ENCODE measurements at regions of chr11 and their contacts with region 1.

Region 1: GRCh38 chr11:65539560-65540296 is 14.8 kb downstream of the SCYL1 start:
- DNase-seq: peak in 1 of 2 donors; percentile 42
- H3K4me3 ChIP-seq: peak overlapping the region; percentile 37 to 48
- H3K27ac ChIP-seq: peak overlapping the region; percentile 90 to 93
- H3K4me1 ChIP-seq: peaks cover 10 to 12% of the 10 kb centered on the region in 2 donors
- H3K27me3 ChIP-seq: no peaks in the 10 kb centered on the region
- CTCF ChIP-seq: peak in 3 of 4 experiments; percentile 53 to 80 (median 71)
- POLR2A ChIP-seq: no peak

Region 2: DNA sequence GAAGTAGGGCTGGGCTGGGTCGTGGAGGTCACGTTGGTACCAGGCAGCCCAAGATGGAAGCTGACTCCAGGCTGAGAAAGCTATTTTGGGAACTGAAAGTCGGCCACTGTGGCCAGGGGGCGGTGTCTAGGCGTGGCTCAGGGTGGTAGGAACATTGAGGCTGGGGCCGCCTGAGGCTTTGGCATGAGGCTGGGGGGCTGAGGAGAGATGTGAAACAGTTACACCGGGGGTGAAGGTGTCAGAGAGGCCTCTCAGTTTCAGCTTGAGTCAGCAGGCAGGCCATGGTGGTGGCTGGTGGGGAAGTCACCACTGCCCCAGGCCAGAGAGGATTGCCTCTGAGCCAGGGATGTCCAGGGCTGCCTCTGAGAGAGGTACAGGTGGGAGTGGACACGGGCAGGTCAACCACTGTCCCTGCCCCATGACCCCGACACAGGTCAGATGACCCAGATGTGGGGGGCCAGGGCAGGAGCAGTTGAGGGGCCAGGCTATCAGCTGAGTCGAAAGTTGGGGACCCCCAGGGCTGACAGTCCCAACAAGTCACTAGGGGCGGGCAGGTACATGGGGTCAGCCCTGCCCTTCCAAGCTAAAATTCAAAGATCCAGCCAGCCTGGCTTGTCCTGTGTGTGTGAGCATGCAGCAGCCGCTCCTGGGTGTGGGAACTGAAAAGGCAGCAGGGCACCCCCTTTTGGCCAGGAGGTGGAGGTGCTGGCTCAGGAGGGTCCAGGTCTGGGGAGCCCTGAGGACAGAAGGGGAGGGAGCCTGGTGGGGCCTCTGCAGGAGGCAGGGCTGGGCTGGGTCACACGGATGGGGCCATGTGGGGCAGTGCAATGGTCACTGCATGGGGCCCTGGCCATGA is 48.7 kb after region 1 on chr11:
- intact Hi-C with region 1: loop called (anchors 10 kb)
- DNase-seq: peak in 1 of 2 donors; percentile 70
- H3K4me3 ChIP-seq: no peak overlapping the region
- H3K27ac ChIP-seq: peak overlapping the region; percentile 58 to 70
- H3K4me1 ChIP-seq: peaks cover 0 to 6% of the 10 kb centered on the region in 2 donors
- H3K27me3 ChIP-seq: no peaks in the 10 kb centered on the region
- CTCF ChIP-seq: peak; percentile 16 to 65 (median 56)
- POLR2A ChIP-seq: no peak